Natural killer cell (primary cell): ENCODE measurements at regions of chr19 and their contacts with region 1.

Region 1: DNA sequence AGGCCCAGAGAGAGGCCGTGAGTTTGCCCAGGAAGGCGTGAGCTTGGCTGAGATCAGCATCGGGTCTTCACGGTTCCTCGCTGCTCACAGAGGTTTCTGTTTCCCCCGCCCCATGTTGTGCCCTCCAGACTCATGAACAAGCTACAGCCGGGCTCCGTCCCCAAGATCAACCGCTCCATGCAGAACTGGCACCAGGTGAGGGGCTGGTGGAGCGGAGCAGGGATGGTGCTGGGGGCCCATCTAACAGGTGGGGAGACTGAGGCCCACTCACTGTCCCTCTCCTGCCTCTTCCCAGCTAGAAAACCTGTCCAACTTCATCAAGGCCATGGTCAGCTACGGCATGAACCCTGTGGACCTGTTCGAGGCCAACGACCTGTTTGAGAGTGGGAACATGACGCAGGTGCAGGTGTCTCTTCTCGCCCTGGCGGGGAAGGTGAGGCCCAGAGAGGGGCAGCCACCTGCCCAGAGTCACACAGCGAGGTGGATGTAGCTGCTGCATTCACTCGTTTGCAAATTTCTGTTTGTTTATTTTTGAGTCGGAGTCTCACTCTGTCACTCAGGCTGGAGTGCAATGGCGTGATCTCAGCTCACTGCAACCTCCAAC is 6.0 kb downstream of the CNN2 start:
- DNase-seq: no peak
- ATAC-seq: no peak
- H3K4me3 ChIP-seq: no peak overlapping the region
- H3K4me3 Mint-ChIP-seq: no peak overlapping the region
- H3K27ac ChIP-seq: no peak overlapping the region
- H3K27ac Mint-ChIP-seq: no peak overlapping the region
- H3K4me1 ChIP-seq: peaks cover 68% of the 10 kb centered on the region
- H3K4me1 Mint-ChIP-seq: peaks cover 14 to 28% of the 10 kb centered on the region in 2 donors
- H3K27me3 ChIP-seq: no peaks in the 10 kb centered on the region
- H3K27me3 Mint-ChIP-seq: no peaks in the 10 kb centered on the region
- CTCF ChIP-seq: no peak

Region 2: DNA sequence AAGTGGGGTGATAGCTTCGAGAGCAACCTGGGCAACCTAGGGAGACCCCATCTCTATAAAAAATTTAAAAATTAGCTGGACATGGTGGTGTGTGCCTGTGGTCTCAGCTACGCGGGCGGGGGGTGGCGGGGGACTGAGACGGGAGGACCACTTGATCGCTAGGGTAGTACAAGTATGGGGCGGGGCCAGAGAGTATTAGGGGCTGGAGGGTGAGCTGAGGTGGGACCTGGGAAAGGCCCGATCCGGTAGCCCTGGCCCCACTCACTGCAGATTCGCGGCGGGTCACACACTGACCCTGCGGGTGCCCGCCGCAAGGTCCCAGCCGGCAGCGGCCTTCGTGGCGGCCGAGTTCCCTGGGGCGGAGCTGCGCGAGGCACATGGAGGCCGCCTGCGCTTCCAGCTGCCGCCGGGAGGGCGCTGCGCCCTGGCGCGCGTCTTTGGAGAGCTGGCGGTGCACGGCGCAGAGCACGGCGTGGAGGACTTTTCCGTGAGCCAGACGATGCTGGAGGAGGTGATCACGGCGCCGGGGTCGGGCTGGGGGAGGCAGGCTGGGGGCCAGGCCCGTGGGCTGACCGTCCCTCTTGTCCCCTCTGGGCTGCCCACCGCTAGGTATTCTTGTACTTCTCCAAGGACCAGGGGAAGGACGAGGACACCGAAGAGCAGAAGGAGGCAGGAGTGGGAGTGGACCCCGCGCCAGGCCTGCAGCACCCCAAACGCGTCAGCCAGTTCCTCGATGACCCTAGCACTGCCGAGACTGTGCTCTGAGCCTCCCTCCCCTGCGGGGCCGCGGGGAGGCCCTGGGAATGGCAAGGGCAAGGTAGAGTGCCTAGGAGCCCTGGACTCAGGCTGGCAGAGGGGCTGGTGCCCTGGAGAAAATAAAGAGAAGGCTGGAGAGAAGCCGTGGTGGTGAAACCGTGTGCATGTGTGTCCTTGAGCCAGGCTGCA is 32.6 kb after region 1 on chr19:
- intact Hi-C with region 1: loop called (anchors 5 kb)
- DNase-seq: peak; percentile 68 to 90
- ATAC-seq: peak; percentile 25 to 52 (median 34)
- H3K4me3 ChIP-seq: no peak overlapping the region
- H3K4me3 Mint-ChIP-seq: peak overlapping the region; percentile 76
- H3K27ac ChIP-seq: no peak overlapping the region
- H3K27ac Mint-ChIP-seq: peak overlapping the region; percentile 81 to 93
- H3K4me1 ChIP-seq: peaks cover 55% of the 10 kb centered on the region
- H3K4me1 Mint-ChIP-seq: peaks cover 19 to 47% of the 10 kb centered on the region in 2 donors
- H3K27me3 ChIP-seq: no peaks in the 10 kb centered on the region
- H3K27me3 Mint-ChIP-seq: no peaks in the 10 kb centered on the region
- CTCF ChIP-seq: peak; percentile 78

Region 3: GRCh38 chr19:1465191-1466016 is 433.0 kb after region 1 on chr19:
- intact Hi-C with region 1: no loop called
- DNase-seq: peak in 1 of 2 donors; percentile 65
- ATAC-seq: peak in 2 of 3 donors; percentile 27 to 45
- H3K4me3 ChIP-seq: no peak overlapping the region
- H3K4me3 Mint-ChIP-seq: no peak overlapping the region
- H3K27ac ChIP-seq: no peak overlapping the region
- H3K27ac Mint-ChIP-seq: no peak overlapping the region
- H3K4me1 ChIP-seq: peaks cover 38% of the 10 kb centered on the region
- H3K4me1 Mint-ChIP-seq: peaks cover 0 to 5% of the 10 kb centered on the region in 2 donors
- H3K27me3 ChIP-seq: peaks cover 13% of the 10 kb centered on the region
- H3K27me3 Mint-ChIP-seq: peaks cover 0 to 3% of the 10 kb centered on the region in 2 donors
- CTCF ChIP-seq: peak; percentile 17